HepG2 (cell line): ENCODE measurements at regions of chr15 and their contacts with region 1.

Region 1: DNA sequence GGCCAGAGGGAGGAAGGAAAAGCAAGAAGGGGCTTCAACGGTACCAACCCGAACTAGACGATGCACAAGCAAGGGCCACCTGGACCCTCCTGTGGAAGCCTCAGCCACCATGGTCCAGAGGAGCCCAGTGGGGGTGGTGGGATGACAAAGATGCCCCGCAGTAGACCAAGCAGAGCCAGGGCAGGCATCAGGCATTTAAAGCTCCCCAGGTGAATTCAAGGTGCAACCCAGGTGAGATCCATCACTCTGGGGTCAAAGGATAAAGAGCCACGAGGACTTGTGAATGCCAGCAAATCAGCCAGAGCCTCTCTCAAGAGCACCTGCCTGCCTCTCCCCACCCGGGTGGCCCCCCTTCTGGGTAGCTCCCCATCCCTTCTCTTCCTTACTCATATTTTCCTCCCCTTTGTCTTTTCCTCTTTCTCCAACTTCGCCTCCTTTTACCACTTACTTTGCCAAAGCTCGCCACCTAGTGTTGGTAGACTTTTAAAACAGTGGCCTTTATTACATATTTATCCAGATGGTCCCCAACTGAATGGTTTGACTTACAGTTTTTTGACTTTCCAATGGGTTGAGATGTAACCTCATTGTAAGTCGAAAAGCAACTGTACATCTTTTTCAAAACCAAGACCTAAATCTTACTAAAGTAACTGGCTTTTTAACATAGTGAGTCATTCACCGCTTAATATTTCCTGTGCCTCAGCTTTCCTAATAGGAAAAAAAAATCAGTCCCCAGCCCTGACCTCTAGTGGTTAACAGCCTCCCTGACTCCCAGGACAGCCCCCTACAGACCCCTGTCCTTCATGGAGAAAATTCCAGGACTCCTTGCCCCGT is 18.8 kb downstream of the PLA2G4F start:
- DNase-seq: peak; percentile 48
- ATAC-seq: no peak
- H3K4me3 ChIP-seq: no peak overlapping the region
- H3K27ac ChIP-seq: no peak overlapping the region
- H3K4me1 ChIP-seq: peaks cover 81% of the 10 kb centered on the region
- H3K27me3 ChIP-seq: no peaks in the 10 kb centered on the region
- CTCF ChIP-seq: peak; percentile 53
- EP300 ChIP-seq: no peak
- POLR2A ChIP-seq: no peak
- RAD21 ChIP-seq: no peak

Region 2: DNA sequence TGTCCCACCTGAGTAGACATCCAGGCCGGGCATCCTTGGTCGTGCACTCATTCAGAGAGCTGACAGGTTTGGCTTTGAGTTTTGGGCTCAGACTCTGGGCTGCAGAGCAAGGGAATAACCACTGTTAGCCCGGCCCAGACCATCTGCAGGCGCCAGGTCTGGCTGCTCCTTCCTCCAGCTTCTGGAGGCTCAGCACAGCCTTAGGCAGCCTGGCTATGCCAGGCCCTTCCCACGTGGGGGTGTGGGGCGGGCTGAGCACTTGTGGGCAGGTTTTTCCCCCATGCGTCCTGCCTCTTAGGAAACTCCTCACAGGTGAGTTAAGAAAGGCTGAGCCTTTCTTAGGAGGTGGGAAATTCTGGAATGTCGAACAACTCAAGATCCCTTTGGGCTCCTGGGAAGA is 287.8 kb before region 1 on chr15:
- CTCF ChIA-PET with region 1: no interaction called
- POLR2A ChIA-PET with region 1: no interaction called
- in situ Hi-C with region 1: no loop called
- intact Hi-C with region 1: no loop called
- DNase-seq: no peak
- ATAC-seq: no peak
- H3K4me3 ChIP-seq: no peak overlapping the region
- H3K27ac ChIP-seq: no peak overlapping the region
- H3K4me1 ChIP-seq: no peaks in the 10 kb centered on the region
- H3K27me3 ChIP-seq: peaks cover 4 to 5% of the 10 kb centered on the region in 2 experiments; a peak in 4 of 5 replicates
- CTCF ChIP-seq: no peak
- EP300 ChIP-seq: no peak
- POLR2A ChIP-seq: no peak
- RAD21 ChIP-seq: no peak

Region 3: DNA sequence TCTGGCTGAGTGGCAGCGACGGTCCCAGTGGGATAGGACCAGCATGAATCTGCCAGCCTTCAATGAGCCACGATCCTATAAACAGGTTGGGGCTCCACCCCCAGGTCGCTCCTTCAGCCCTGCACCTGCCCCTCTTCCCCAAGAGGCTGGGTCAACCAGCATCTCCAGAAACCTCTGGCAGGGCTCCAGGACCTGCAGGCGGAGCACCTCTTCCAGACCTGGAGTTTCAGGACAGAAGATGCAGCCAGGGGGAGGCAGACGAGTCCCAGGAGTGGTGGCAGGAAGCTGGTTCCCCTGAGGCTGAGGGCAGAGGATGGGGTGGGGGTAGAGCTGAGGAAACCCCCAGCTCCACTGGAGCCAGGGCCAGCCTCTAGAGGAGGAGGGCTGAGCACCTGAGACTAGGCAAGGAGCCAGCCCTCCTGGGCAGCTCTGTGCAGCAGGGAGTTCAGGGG is 43.1 kb before region 1 on chr15 and contains the start of gene PLA2G4D:
- CTCF ChIA-PET with region 1: no interaction called
- POLR2A ChIA-PET with region 1: no interaction called
- in situ Hi-C with region 1: loop called (anchors 5 kb)
- intact Hi-C with region 1: no loop called
- DNase-seq: no peak
- ATAC-seq: peak; percentile 47
- H3K4me3 ChIP-seq: no peak within 1 kb of the TSS; a peak in 1 of 6 replicates
- H3K27ac ChIP-seq: no peak within 1 kb of the TSS
- H3K4me1 ChIP-seq: peaks cover 63% of the 10 kb centered on the region
- H3K27me3 ChIP-seq: peaks cover 2 to 22% of the 10 kb centered on the region in 2 experiments; a peak in 4 of 5 replicates
- CTCF ChIP-seq: peak; percentile 56
- EP300 ChIP-seq: no peak
- POLR2A ChIP-seq: no peak
- RAD21 ChIP-seq: no peak
- total RNA-seq, gene PLA2G4D: 0.04 TPM in 1 of 2 replicates, not detected in the other